H1 (cell line): ENCODE measurements at regions of chr2 and their contacts with region 1.

Region 1: DNA sequence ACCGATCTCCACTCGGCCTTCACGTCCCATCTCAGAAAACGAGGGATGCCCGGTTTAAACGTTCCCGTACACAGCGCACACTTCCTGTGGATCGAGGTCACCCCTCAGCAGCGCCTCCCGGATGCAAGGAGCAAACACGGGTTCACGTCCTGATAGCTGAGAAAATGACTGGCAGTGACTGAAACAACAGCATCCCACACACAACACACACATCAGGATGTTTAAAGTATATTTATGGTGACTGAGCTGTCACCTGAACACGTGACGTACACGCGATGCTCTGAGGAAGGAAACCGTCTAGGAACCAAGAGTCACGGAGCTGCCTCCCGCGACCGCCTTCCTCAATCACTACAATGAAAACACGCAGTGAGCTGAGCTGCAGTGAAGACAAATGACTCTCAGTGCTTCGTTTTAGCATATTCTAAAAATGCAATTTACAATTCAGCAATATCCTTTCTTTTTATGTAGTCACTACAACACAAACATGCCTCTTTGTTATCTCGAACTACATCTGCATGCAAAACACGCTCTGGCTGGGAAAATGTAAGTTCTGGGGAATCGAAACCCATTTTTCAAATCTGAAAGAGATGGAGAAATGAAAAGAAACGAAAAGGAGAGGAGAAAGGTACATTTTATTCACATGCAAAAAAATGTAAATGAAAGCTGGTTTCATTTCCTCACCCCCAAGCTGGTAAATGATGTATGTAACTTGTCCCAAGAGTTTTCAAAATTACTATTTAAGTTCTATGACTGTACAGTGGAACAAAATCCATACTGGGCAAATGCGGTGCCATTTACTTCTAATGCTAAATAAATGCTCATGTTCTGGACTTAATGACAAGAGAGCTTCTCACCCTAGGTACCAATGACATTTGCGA is 19.8 kb downstream of the HDAC4 start:
- DNase-seq: no peak
- H3K4me3 ChIP-seq: peak overlapping the region in 1 of 4 experiments; percentile 22; a peak in 1 of 8 replicates
- H3K27ac ChIP-seq: no peak overlapping the region
- H3K4me1 ChIP-seq: peaks cover 12 to 33% (median 20%) of the 10 kb centered on the region in 4 experiments
- H3K27me3 ChIP-seq: no peaks in the 10 kb centered on the region
- CTCF ChIP-seq: peak in 1 of 3 experiments; percentile 1; a peak in 1 of 4 replicates
- EP300 ChIP-seq: no peak
- POLR2A ChIP-seq: no peak
- RAD21 ChIP-seq: no peak

Region 2: GRCh38 chr2:238929242-238930081 is 451.6 kb before region 1 on chr2:
- CTCF ChIA-PET with region 1: no interaction called
- POLR2A ChIA-PET with region 1: no interaction called
- DNase-seq: no peak
- H3K4me3 ChIP-seq: no peak overlapping the region
- H3K27ac ChIP-seq: no peak overlapping the region
- H3K4me1 ChIP-seq: no peaks in the 10 kb centered on the region
- H3K27me3 ChIP-seq: no peaks in the 10 kb centered on the region
- CTCF ChIP-seq: no peak
- EP300 ChIP-seq: no peak
- POLR2A ChIP-seq: no peak
- RAD21 ChIP-seq: no peak

Region 3: GRCh38 chr2:239326831-239327535 is 54.1 kb before region 1 on chr2:
- CTCF ChIA-PET with region 1: no interaction called
- POLR2A ChIA-PET with region 1: no interaction called
- DNase-seq: peak in 1 of 2 experiments; percentile 37
- H3K4me3 ChIP-seq: no peak overlapping the region
- H3K27ac ChIP-seq: no peak overlapping the region
- H3K4me1 ChIP-seq: peaks cover 0 to 15% (median 7%) of the 10 kb centered on the region in 4 experiments; a peak in 4 of 7 replicates
- H3K27me3 ChIP-seq: no peaks in the 10 kb centered on the region
- CTCF ChIP-seq: no peak
- EP300 ChIP-seq: no peak
- POLR2A ChIP-seq: no peak
- RAD21 ChIP-seq: no peak

Region 4: DNA sequence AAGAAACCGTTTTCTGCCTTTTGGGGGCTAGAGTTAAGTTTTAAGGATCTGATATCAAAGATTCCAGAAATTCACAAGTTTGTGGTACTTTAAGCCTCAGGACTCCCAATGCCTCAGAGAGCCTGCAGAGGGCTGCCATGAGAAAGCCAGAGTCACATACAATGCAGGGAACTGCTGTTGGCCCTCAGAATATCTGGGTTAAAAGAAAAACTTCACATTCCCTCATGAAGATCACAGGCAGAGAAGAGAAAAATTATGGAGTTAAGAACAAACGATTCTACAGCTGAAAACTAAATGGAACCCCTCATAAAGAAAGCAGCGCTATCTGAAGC is 19.8 kb before region 1 on chr2:
- CTCF ChIA-PET with region 1: interaction called, 10 read pairs
- POLR2A ChIA-PET with region 1: no interaction called
- DNase-seq: no peak
- H3K4me3 ChIP-seq: no peak overlapping the region
- H3K27ac ChIP-seq: no peak overlapping the region
- H3K4me1 ChIP-seq: peaks cover 0 to 8% (median 3%) of the 10 kb centered on the region in 4 experiments; a peak in 5 of 7 replicates
- H3K27me3 ChIP-seq: no peaks in the 10 kb centered on the region; a peak in 1 of 7 replicates
- CTCF ChIP-seq: peak in 2 of 3 experiments; percentile 29 to 31; a peak in 3 of 4 replicates
- EP300 ChIP-seq: no peak
- POLR2A ChIP-seq: no peak
- RAD21 ChIP-seq: peak in 1 of 2 experiments; percentile 38; a peak in 2 of 4 replicates

Region 5: DNA sequence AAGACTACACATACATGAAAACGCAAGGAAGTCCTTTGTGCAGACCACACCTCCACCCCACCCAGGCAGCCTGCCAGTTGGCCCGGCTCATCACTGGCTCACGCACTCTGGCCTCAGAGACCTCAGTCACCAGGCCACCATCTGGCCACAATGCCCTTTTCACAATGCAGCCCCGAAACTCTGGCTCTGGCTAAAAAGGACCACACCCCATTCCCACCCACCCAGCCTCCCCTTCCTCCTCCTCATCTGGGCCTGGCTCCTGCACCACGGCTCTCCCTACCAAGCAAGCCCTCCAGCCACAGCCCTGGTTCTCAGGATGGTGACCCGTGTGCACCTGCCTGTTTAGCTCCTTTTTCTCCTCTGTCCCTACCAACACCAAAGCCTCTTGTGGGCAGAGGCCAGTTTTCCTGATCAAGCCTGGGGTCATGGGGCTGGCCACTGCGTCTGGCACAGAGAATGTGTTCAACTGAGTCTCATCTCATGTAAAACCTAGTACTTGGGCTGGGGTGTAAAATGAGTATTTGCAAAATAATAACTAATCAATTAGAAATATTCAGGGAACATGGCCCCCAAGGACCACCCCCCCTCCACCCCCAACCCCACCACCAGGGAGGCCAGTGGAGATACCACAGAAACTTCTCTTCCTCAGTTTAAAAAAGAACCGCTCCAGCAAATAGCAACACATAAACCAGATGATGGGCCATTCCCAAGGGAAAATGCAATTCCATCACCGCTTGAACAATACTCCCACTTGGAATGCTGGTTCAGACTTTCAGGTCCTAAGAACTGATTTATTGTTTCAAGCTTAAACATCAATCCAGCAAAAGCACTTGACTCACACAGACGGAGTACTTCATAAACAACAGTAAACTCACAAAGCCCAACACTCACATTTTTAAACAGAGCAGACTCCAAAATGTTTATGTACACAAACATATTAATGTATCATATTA is 12.6 kb after region 1 on chr2:
- CTCF ChIA-PET with region 1: interaction called, 30 read pairs
- POLR2A ChIA-PET with region 1: interaction called, 7 read pairs
- DNase-seq: no peak
- H3K4me3 ChIP-seq: no peak overlapping the region
- H3K27ac ChIP-seq: no peak overlapping the region
- H3K4me1 ChIP-seq: peaks cover 0 to 13% (median 4%) of the 10 kb centered on the region in 4 experiments; a peak in 5 of 7 replicates
- H3K27me3 ChIP-seq: no peaks in the 10 kb centered on the region
- CTCF ChIP-seq: no peak
- EP300 ChIP-seq: no peak
- POLR2A ChIP-seq: no peak
- RAD21 ChIP-seq: no peak

Region 6: DNA sequence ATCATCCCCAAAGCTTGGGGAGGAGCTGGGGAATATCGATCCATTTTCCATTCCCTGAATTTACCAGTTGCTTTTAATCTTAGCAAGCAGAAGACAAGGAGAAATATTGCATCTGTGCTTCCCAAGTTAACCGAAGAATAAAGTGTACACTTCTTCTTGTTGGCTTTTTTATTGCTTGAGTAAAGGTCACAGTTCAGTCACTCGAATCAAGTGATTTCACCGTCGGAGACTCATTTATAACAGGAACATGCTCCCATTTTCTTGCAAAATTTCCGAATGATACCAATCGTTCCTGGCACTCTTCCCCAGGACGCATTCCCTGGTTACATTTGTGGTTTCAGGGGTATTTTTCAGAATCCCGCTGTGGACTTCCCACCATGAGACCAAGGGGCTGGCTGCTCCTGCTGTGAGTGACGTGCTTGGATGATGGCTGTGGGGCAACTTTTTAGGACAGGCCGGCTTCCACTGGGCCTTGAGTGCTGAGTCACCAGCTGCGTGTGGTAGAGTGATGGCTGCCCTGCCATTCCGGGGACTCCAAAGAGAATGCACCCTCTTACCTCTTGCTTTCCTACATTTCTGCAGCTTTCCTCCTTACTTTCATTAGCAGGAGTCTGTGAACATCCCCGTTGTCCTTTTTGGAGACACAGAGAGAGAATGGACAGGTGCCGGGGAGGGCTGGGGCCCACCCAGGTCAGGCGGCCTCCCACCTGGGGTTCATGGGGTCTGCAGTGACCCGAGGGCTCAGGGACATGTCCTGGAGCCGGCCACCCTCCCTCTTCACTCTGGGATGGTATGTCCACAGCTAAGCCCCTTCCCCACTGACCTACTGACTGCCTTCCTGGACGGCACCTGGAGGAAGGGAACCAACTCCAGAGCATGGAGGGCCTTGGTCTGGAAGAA is 80.5 kb after region 1 on chr2:
- CTCF ChIA-PET with region 1: no interaction called
- POLR2A ChIA-PET with region 1: no interaction called
- DNase-seq: peak in 1 of 2 experiments; percentile 13
- H3K4me3 ChIP-seq: no peak overlapping the region
- H3K27ac ChIP-seq: no peak overlapping the region
- H3K4me1 ChIP-seq: no peaks in the 10 kb centered on the region
- H3K27me3 ChIP-seq: no peaks in the 10 kb centered on the region
- CTCF ChIP-seq: no peak
- EP300 ChIP-seq: no peak
- POLR2A ChIP-seq: no peak
- RAD21 ChIP-seq: no peak